BJ (cell line): ENCODE measurements at regions of chr14 and their contacts with region 1.

Region 1: DNA sequence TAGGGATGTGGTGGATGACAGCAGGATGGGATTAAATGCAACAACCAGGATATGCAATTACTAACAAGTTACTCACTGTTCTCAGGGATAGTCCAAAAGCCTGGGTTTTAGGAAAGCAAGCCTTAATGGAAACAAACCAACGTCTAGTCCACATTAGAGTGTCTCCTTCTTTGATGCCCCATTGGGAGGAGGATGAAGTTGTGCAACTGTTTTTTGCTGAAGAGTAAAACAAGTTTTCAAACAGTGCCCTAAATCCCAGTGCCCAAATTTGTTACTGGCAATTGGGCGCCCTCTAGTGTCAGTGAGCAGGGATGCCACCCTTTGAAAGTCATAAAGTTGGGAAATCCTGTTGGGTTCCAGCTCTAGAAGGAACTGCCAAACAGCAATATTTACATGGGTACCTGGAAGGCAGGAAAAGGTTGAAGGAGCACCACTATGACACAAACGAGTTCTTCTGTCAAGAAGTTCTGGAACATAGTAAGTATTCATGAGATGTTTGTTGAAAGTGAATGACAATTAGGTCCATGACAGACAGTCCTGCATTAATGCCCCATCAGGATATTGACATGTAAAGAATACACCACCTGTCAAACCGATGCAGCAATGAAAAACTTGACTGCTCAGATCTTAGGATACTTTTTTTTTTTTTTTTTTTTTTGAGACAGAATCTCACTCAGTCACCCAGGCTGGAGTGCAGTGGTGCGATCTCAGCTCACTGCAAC is 11.1 kb upstream of the DPF3 start:
- DNase-seq: no peak
- H3K4me3 ChIP-seq: no peak overlapping the region
- H3K27me3 ChIP-seq: no peaks in the 10 kb centered on the region
- CTCF ChIP-seq: peak; percentile 88

Region 2: GRCh38 chr14:72523424-72524294 is 381.3 kb before region 1 on chr14:
- CTCF ChIA-PET with region 1: interaction called, 215 read pairs
- POLR2A ChIA-PET with region 1: no interaction called
- DNase-seq: no peak
- H3K4me3 ChIP-seq: no peak overlapping the region
- H3K27me3 ChIP-seq: no peaks in the 10 kb centered on the region
- CTCF ChIP-seq: no peak

Region 3: DNA sequence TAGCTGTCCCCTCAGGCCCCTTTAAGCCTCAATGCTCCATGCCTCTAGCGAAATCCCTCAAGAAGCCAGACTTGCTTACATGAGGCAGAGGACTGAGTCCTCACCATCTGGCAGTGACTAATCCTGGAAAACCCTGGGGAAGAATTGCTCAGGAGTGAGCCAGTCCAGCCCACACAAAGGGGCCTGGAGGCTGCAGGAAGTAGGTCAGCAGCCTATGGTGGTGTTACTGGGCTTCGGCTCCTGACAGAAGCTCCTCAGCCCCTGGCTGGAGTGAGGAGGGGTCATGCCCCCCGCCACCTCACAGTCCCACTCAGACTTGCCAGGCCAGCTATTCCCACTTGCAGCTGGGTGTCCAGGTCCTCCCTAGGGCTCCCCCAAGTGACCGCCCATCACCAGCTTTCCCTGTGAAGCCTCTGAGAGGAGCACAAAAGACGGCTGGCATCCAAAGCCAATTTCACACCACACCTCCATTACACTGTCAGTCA is 261.6 kb before region 1 on chr14:
- CTCF ChIA-PET with region 1: interaction called, 11 read pairs
- POLR2A ChIA-PET with region 1: no interaction called
- DNase-seq: peak; percentile 94
- H3K4me3 ChIP-seq: no peak overlapping the region
- H3K27me3 ChIP-seq: no peaks in the 10 kb centered on the region
- CTCF ChIP-seq: no peak

Region 4: GRCh38 chr14:72736314-72736715 is 168.7 kb before region 1 on chr14:
- CTCF ChIA-PET with region 1: interaction called, 12 read pairs
- POLR2A ChIA-PET with region 1: no interaction called
- DNase-seq: peak; percentile 50
- H3K4me3 ChIP-seq: no peak overlapping the region
- H3K27me3 ChIP-seq: no peaks in the 10 kb centered on the region
- CTCF ChIP-seq: peak; percentile 41; the same call in 1 of the 2 replicates

Region 5: DNA sequence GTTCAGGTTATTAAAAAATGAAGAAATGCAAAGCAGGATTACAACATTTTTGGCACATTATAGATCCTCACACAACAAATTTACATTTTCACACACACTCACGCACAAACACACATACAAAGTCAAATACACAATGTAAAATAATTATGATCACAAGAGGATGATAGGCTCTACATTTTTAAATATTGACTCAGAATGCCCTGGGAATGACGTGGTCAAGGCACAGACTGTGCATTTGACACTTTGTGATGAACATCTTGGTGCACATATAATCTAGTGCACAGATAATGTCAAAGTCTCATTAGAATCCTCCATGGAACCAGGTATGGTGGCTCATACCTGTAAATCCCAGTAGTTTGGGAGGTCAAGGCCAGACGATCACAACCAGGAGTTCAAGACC is 60.5 kb before region 1 on chr14:
- CTCF ChIA-PET with region 1: no interaction called
- POLR2A ChIA-PET with region 1: no interaction called
- DNase-seq: no peak
- H3K4me3 ChIP-seq: no peak overlapping the region
- H3K27me3 ChIP-seq: no peaks in the 10 kb centered on the region
- CTCF ChIP-seq: no peak

Region 6: GRCh38 chr14:72893636-72894321 is 11.2 kb before region 1 on chr14 and contains the start of gene DPF3:
- CTCF ChIA-PET with region 1: interaction called, 16 read pairs
- POLR2A ChIA-PET with region 1: no interaction called
- DNase-seq: peak; percentile 77
- H3K4me3 ChIP-seq: peak within 1 kb of the TSS; percentile 56
- H3K27me3 ChIP-seq: no peaks in the 10 kb centered on the region
- CTCF ChIP-seq: no peak
- polyA plus RNA-seq, gene DPF3: 3.6 and 4.3 TPM in 2 replicates

Region 7: GRCh38 chr14:72932893-72933292 is 27.9 kb after region 1 on chr14:
- CTCF ChIA-PET with region 1: no interaction called
- POLR2A ChIA-PET with region 1: no interaction called
- DNase-seq: no peak
- H3K4me3 ChIP-seq: no peak overlapping the region
- H3K27me3 ChIP-seq: no peaks in the 10 kb centered on the region
- CTCF ChIP-seq: no peak

Region 8: DNA sequence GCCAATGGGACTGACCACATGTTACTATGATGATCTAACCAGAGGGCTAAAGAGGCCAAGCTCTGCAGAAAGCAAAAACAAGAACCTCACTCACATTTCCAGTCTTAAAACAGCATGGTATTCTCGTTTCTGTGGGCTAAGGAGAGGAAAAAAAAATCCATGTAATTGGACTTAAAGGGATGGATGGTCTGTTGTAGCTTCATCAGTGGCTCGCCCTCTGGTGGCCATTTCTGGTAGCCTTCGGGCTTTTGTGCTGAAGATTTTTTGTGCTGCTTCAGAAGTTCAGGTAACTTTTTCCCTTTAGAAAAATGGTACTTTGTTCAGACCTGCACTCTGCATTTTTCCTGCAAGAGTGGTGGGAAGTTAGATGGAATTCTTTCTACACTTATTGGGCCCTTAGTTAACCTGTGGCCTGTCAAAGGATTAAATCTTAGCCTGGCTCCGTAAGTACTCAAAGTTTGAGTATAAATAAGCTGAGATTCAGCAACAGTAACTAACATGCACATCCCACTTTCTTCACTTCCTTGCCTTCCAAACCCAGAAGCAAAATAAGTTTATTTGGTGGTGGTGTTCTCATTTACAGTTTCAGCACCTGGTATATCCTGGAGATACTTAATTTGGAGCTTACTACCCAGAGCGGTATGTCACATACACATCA is 43.6 kb after region 1 on chr14:
- CTCF ChIA-PET with region 1: interaction called, 25 read pairs
- POLR2A ChIA-PET with region 1: no interaction called
- DNase-seq: no peak
- H3K4me3 ChIP-seq: no peak overlapping the region
- H3K27me3 ChIP-seq: no peaks in the 10 kb centered on the region
- CTCF ChIP-seq: peak; percentile 86

Region 9: DNA sequence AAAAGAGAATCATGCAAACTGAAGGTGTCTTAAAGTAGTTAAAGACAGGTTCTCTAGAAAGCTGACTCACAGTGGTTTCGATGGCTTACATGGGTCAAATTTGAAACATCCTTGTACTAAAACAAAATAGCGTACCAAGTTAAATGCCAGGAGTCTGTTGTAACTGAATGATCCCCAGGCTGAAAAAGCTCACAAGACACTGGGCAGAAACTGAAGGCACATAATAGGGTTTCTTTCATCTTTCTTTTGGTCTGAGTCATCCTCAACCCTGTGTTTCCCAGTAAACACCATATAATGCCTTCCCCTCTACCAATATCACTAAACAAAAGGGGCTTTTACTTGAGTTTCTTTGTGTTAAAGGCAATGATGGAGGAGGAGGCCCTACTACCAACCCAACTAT is 109.1 kb after region 1 on chr14:
- CTCF ChIA-PET with region 1: no interaction called
- POLR2A ChIA-PET with region 1: no interaction called
- DNase-seq: peak; percentile 58
- H3K4me3 ChIP-seq: no peak overlapping the region
- H3K27me3 ChIP-seq: no peaks in the 10 kb centered on the region
- CTCF ChIP-seq: no peak

Region 10: GRCh38 chr14:74048281-74048680 is 1143.3 kb after region 1 on chr14:
- CTCF ChIA-PET with region 1: no interaction called
- POLR2A ChIA-PET with region 1: no interaction called
- DNase-seq: no peak
- H3K4me3 ChIP-seq: no peak overlapping the region
- H3K27me3 ChIP-seq: no peaks in the 10 kb centered on the region
- CTCF ChIP-seq: no peak